ENCODE measurements at regions of chr3 and their contacts with region 1.

Region 1: DNA sequence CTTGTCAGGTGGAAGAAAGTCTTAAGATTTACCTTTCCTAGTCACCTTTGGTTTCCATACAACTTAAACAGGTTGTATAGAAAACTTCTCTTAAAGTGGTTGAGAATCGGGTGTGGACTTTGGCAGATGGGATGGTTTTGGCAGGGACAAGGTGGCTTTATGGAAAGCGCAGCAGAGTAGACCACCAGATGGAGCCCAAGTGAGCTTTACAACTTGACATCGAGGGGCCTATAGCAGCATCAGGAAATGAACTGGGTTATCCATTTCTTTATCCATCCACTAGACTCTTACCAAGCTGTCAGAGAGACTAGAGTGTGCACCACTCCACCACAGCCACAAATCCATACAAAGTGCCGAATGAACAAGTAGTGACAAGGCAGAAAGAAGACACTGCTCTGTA is 85.3 kb upstream of the MBNL1 start:
- DNase-seq: peak in 2 of 4 donors; percentile 44 to 62
- ATAC-seq: no peak
- H3K4me3 ChIP-seq: no peak overlapping the region
- H3K27ac ChIP-seq: no peak overlapping the region
- H3K4me1 ChIP-seq: peaks cover 0 to 4% of the 10 kb centered on the region in 2 donors
- H3K27me3 ChIP-seq: no peaks in the 10 kb centered on the region
- CTCF ChIP-seq: peak; percentile 16 to 26

Region 2: GRCh38 chr3:152322756-152323155 is 139.3 kb after region 1 on chr3:
- intact Hi-C with region 1: loop called in 1 of 2 experiments (anchors 10 kb)
- DNase-seq: no peak
- ATAC-seq: peak; percentile 45
- H3K4me3 ChIP-seq: no peak overlapping the region
- H3K27ac ChIP-seq: no peak overlapping the region
- H3K4me1 ChIP-seq: peaks cover 35 to 80% of the 10 kb centered on the region in 2 donors
- H3K27me3 ChIP-seq: no peaks in the 10 kb centered on the region
- CTCF ChIP-seq: no peak

Region 3: DNA sequence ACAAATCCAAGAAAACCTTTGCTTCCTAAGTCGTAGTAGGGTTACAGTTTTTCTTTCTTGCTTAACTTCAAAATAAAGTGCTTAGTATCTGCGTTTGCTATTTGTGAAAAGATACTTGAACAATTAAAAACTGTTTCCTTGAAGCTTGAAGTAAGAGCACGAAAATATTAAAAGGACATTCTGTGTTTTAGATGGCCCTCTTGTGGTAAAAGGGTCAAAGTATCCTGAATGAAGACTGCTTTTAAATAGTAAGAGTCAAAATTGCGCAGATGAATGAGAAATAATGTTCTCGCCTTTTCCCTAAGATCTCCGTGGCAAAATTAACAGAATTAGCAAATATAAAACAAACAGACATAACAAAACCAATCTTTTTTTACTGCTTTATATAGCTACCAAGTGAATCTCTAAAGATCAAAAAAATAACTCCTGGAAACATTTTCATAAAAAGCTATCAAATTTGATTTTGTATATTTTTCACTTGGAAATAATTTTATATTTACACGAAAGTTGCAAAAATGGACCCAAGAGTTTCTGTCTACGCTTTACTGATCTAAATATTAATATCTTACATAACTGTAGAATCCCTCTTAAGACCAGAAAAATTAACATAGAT is 260.7 kb after region 1 on chr3:
- intact Hi-C with region 1: loop called in 1 of 2 experiments (anchors 10 kb)
- DNase-seq: peak in 2 of 4 donors; percentile 38 to 61
- ATAC-seq: peak; percentile 73
- H3K4me3 ChIP-seq: no peak overlapping the region
- H3K27ac ChIP-seq: peak overlapping the region; percentile 0 to 42
- H3K4me1 ChIP-seq: peaks cover 3 to 62% of the 10 kb centered on the region in 2 donors
- H3K27me3 ChIP-seq: no peaks in the 10 kb centered on the region
- CTCF ChIP-seq: peak; percentile 44 to 54

Measured in left lung (tissue), 14 donors.